ENCODE measurements at regions of chr22 and their contacts with region 1.

Region 1: DNA sequence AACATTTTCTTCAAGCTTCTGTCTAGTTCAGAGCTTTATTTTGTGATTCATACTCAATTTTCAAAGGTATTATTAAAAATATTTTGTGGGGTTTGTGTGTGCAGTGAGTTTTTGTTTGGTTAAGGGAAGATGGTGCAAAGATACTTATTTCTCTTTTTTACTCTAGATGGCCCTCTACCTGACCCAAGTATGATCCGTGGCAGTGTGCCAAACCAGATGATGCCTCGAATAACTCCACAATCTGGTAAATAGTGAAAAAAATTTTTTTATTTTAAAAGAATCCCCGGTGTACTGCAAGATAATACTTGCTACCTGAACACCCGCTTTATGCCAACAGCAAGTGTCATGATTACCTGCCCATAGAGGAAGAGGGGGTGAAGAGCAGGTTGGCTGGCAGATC is 54.2 kb downstream of the EP300 start:
- DNase-seq: peak in 2 of 7 donors; percentile 17 to 24
- H3K4me3 ChIP-seq: no peak overlapping the region
- H3K27ac ChIP-seq: no peak overlapping the region
- H3K4me1 ChIP-seq: no peaks in the 10 kb centered on the region
- H3K27me3 ChIP-seq: no peaks in the 10 kb centered on the region
- CTCF ChIP-seq: no peak
- POLR2A ChIP-seq: no peak

Region 2: GRCh38 chr22:41204992-41205900 is 58.7 kb after region 1 on chr22 and contains the start of gene L3MBTL2:
- intact Hi-C with region 1: loop called in 1 of 2 experiments (anchors 10 kb)
- DNase-seq: peak; percentile 94 to 99 (median 97)
- H3K4me3 ChIP-seq: peak within 1 kb of the TSS; percentile 84 to 95 (median 88)
- H3K27ac ChIP-seq: peak within 1 kb of the TSS in 4 of 5 donors; percentile 47 to 80 (median 70)
- H3K4me1 ChIP-seq: peaks cover 9% of the 10 kb centered on the region in 2 donors
- H3K27me3 ChIP-seq: no peaks in the 10 kb centered on the region
- CTCF ChIP-seq: no peak
- POLR2A ChIP-seq: peak in 1 of 2 donors; percentile 10
- total RNA-seq, gene L3MBTL2: 16.1 to 31.9 (median 25.7) TPM

Measured in adrenal gland (tissue), 19 donors.